Gastrocnemius medialis (tissue), 4 donors: ENCODE measurements at regions of chr5 and their contacts with region 1.

Region 1: GRCh38 chr5:74326571-74327338 is 313.8 kb downstream of the ENC1 start:
- DNase-seq: peak in 1 of 2 donors; percentile 18
- ATAC-seq: peak; percentile 47 to 54
- H3K4me3 ChIP-seq: no peak overlapping the region
- H3K27ac ChIP-seq: peak overlapping the region in 3 of 4 donors; percentile 44 to 52 (median 47)
- H3K4me1 ChIP-seq: peaks cover 27 to 30% of the 10 kb centered on the region in 2 donors
- H3K27me3 ChIP-seq: no peaks in the 10 kb centered on the region
- CTCF ChIP-seq: no peak
- POLR2A ChIP-seq: no peak

Region 2: GRCh38 chr5:74288448-74289108 is 38.2 kb before region 1 on chr5:
- in situ Hi-C with region 1: no loop called
- intact Hi-C with region 1: loop called (anchors 5 kb)
- DNase-seq: peak; percentile 62 to 75
- ATAC-seq: peak; percentile 90 to 91
- H3K4me3 ChIP-seq: no peak overlapping the region
- H3K27ac ChIP-seq: peak overlapping the region; percentile 75 to 89 (median 77)
- H3K4me1 ChIP-seq: peaks cover 38 to 67% of the 10 kb centered on the region in 2 donors
- H3K27me3 ChIP-seq: no peaks in the 10 kb centered on the region
- CTCF ChIP-seq: no peak
- POLR2A ChIP-seq: no peak